CD8-positive, alpha-beta T cell (primary cell): ENCODE measurements at regions of chr10 and their contacts with region 1.

Region 1: GRCh38 chr10:45594276-45595106 is 78.1 kb downstream of the ZFAND4 start:
- DNase-seq: peak; percentile 79 to 95 (median 88)
- ATAC-seq: peak; percentile 86
- H3K4me3 ChIP-seq: peak overlapping the region; percentile 77 to 85
- H3K4me3 Mint-ChIP-seq: peak overlapping the region; percentile 89
- H3K27ac ChIP-seq: peak overlapping the region; percentile 62 to 63
- H3K27ac Mint-ChIP-seq: peak overlapping the region; percentile 95
- H3K4me1 ChIP-seq: peaks cover 23% of the 10 kb centered on the region
- H3K4me1 Mint-ChIP-seq: peaks cover 42% of the 10 kb centered on the region
- H3K27me3 ChIP-seq: no peaks in the 10 kb centered on the region
- H3K27me3 Mint-ChIP-seq: peaks cover 6% of the 10 kb centered on the region
- CTCF ChIP-seq: no peak

Region 2: DNA sequence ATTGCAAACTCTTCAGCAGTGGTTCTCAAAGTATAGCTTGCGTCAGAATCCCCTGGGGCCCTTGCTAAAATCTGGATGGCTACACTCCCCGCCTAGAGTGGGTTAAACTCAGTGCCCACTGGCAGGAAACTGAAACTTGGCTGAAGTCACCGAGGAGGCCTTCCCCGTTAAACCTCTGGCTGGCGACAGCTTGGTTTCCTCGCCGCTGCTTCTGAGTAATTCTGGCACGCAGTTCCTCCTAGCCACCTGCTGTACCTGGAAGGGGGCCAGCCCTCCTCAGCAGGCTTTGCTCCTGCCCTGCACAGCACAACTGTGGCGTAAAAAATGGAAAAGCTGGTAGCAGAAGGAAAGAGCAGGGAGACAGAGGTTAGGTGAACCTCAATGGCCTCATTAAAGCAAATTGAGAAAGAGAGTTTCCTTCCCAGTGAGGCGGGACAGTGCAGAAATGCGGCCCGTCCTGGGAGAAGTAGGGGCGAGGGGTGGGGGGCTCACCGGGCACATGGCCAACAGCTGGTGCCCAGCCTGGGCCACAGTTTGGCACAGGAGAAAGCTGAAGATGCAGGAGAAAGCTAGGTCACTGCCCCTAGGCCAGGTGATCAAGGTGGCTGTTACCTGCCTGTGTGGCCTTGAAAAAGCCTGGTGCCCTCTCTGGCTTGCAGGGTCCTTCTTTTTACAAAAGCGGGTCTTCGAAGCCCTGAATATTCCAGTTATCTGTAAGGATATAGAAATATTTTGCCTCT is 173.9 kb before region 1 on chr10:
- CTCF ChIA-PET with region 1: no interaction called
- POLR2A ChIA-PET with region 1: no interaction called
- intact Hi-C with region 1: loop called in 1 of 2 experiments (anchors 2 kb)
- DNase-seq: peak in 8 of 9 experiments; percentile 42 to 76 (median 66)
- ATAC-seq: peak; percentile 47
- H3K4me3 ChIP-seq: peak overlapping the region; percentile 27 to 88
- H3K4me3 Mint-ChIP-seq: peak overlapping the region; percentile 92
- H3K27ac ChIP-seq: peak overlapping the region; percentile 52 to 65
- H3K27ac Mint-ChIP-seq: peak overlapping the region; percentile 98
- H3K4me1 ChIP-seq: peaks cover 53% of the 10 kb centered on the region
- H3K4me1 Mint-ChIP-seq: peaks cover 61% of the 10 kb centered on the region
- H3K27me3 ChIP-seq: no peaks in the 10 kb centered on the region
- H3K27me3 Mint-ChIP-seq: no peaks in the 10 kb centered on the region
- CTCF ChIP-seq: no peak

Region 3: GRCh38 chr10:45470098-45471012 is 124.1 kb before region 1 on chr10:
- CTCF ChIA-PET with region 1: no interaction called
- POLR2A ChIA-PET with region 1: no interaction called
- intact Hi-C with region 1: loop called (anchors 5 kb)
- DNase-seq: peak; percentile 19 to 80 (median 57)
- ATAC-seq: peak; percentile 93
- H3K4me3 ChIP-seq: no peak overlapping the region
- H3K4me3 Mint-ChIP-seq: peak overlapping the region; percentile 50
- H3K27ac ChIP-seq: peak overlapping the region; percentile 17 to 47
- H3K27ac Mint-ChIP-seq: peak overlapping the region; percentile 90
- H3K4me1 ChIP-seq: peaks cover 17% of the 10 kb centered on the region
- H3K4me1 Mint-ChIP-seq: peaks cover 34% of the 10 kb centered on the region
- H3K27me3 ChIP-seq: no peaks in the 10 kb centered on the region
- H3K27me3 Mint-ChIP-seq: no peaks in the 10 kb centered on the region
- CTCF ChIP-seq: no peak

Region 4: GRCh38 chr10:45672181-45673073 is 77.9 kb after region 1 on chr10 and contains the start of gene ZFAND4:
- CTCF ChIA-PET with region 1: no interaction called
- POLR2A ChIA-PET with region 1: no interaction called
- intact Hi-C with region 1: loop called (anchors 1 kb)
- DNase-seq: peak; percentile 88 to 98 (median 93)
- ATAC-seq: peak; percentile 97
- H3K4me3 ChIP-seq: peak within 1 kb of the TSS; percentile 82 to 88
- H3K4me3 Mint-ChIP-seq: peak within 1 kb of the TSS; percentile 90
- H3K27ac ChIP-seq: peak within 1 kb of the TSS; percentile 69 to 86
- H3K27ac Mint-ChIP-seq: peak within 1 kb of the TSS; percentile 90
- H3K4me1 ChIP-seq: peaks cover 5% of the 10 kb centered on the region
- H3K4me1 Mint-ChIP-seq: peaks cover 45% of the 10 kb centered on the region
- H3K27me3 ChIP-seq: no peaks in the 10 kb centered on the region
- H3K27me3 Mint-ChIP-seq: no peaks in the 10 kb centered on the region
- CTCF ChIP-seq: peak; percentile 20
- total RNA-seq, gene ZFAND4: 34.7 to 36.6 TPM